OCI-LY7 (cell line): ENCODE measurements at regions of chr6 and their contacts with region 1.

Region 1: GRCh38 chr6:37673436-37673835 is 24.2 kb downstream of the MDGA1 start:
- DNase-seq: no peak
- H3K4me3 ChIP-seq: no peak overlapping the region
- H3K27ac ChIP-seq: no peak overlapping the region
- H3K4me1 ChIP-seq: no peaks in the 10 kb centered on the region
- CTCF ChIP-seq: no peak

Region 2: DNA sequence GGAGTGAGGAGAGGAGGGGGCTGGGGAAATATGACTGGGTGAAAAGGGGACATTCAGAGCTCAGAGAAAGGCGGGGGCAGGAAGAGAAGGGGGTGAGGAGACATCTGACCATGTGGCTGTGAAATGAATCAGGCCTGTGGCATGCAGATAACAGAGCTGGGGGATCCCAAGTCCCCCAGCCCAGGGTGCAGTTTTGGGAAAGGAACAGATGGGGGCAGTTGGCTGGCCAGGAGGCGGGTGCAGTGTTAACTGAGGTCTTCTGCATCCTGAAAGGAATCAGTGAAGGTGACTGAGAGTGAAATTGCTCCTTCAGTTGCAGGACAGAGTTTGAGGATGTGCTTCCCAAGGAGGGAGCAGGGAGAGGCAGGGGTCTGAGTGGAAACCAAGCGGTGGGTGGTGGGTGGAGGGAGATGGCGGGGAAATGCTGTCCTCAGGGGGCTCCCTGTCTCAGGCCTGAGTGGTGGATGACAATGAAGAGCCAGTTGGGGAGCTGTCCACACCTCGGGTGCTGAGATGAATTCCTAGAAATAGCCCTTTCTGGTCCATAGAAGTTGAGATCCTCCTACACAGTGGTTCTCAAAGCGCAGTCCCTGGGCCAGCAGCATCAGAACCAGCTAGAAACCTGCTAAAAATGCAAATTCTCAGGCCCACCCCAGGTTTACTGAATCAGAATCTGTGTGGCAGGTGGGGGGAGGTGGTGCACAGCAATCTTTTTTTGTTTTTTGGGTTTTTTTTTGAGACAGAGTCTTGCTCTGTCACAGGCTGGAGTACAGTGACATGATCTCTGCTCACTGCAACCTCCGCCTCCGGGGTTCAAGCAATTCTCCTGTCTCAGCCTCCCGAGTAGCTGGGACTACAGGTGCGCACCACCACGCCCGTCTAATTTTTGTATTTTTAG is 147.7 kb before region 1 on chr6:
- CTCF ChIA-PET with region 1: no interaction called
- POLR2A ChIA-PET with region 1: no interaction called
- intact Hi-C with region 1: no loop called
- DNase-seq: no peak
- H3K4me3 ChIP-seq: no peak overlapping the region
- H3K27ac ChIP-seq: no peak overlapping the region
- H3K4me1 ChIP-seq: no peaks in the 10 kb centered on the region
- CTCF ChIP-seq: no peak

Region 3: DNA sequence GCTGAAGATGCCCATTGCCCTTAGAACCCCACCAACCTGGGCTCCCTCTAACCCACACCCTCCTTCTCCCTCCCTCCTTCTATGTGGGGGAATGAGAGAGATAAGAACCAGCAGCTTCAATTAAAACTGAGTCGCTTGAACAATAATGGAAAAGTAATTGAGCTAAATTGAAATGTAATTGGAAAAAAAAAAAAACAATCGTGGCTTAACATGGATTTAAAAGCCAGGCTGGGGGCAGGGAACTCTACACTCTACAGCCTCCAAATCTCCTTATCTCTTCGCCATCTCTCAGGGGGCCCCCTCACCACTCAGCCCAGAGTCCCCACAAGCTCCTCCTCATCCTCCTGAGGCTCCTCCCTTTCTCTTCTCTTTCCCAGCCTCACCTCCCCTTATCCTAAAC is 58.9 kb before region 1 on chr6:
- CTCF ChIA-PET with region 1: interaction called, 10 read pairs
- POLR2A ChIA-PET with region 1: no interaction called
- intact Hi-C with region 1: no loop called
- DNase-seq: no peak
- H3K4me3 ChIP-seq: no peak overlapping the region
- H3K27ac ChIP-seq: no peak overlapping the region
- H3K4me1 ChIP-seq: no peaks in the 10 kb centered on the region
- CTCF ChIP-seq: no peak

Region 4: GRCh38 chr6:37777272-37777834 is 103.9 kb after region 1 on chr6:
- CTCF ChIA-PET with region 1: no interaction called
- POLR2A ChIA-PET with region 1: no interaction called
- intact Hi-C with region 1: no loop called
- DNase-seq: no peak
- H3K4me3 ChIP-seq: no peak overlapping the region
- H3K27ac ChIP-seq: no peak overlapping the region
- H3K4me1 ChIP-seq: no peaks in the 10 kb centered on the region
- CTCF ChIP-seq: no peak